Heart right ventricle (tissue), 16 donors: ENCODE measurements at regions of chr10 and their contacts with region 1.

Region 1: DNA sequence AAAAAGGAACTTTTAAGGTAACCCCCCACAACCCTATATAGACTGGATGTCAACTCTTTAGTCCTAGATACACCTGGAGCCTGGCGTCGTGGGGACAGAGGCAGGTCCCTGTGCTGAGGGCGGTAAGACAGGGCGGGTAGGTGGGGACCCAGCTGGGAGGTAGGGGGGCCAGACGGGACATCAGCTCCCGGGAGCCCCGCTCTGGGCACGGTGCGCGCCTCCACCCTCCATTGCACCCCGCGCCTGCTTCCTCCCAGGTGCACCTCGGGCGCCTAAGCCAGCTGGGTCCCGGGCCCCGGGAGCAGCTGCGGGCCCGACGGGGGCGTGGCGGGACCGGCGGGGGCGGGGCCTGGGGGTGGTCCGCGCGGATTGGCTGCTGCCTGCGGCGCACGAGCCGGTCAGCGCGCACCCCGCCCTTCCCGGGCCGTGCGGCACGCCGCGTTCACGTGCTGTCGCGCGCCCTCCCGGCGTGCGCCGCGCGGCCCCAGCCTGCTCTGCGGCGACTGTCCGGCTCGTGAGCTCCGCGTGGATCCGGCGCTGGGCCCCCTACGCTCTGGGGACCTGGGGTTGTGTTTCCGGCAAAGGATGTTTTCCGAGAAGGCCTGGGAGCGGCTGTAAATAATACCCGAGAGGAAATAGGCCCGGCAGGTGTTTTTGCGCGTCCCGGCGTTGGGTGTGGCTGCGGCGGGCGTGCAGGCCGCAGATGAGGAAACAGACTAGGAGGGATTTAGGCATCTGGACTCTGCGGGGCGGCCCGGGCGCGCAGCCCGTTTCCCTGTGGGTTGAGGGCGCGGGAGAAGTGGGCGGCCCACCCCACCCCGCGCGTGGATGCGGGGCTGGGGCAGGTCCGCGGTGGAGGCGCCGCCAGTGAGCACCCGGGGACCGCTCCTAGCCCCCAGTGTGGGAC is 39.1 kb upstream of the PFKFB3 start:
- DNase-seq: peak; percentile 91 to 92
- ATAC-seq: peak; percentile 98 to 100 (median 99)
- H3K4me3 ChIP-seq: peak overlapping the region; percentile 27 to 97 (median 82)
- H3K27ac ChIP-seq: peak overlapping the region; percentile 91 to 98 (median 94)
- H3K4me1 ChIP-seq: peaks cover 6 to 49% (median 30%) of the 10 kb centered on the region in 9 donors
- H3K27me3 ChIP-seq: no peaks in the 10 kb centered on the region
- CTCF ChIP-seq: peak in 1 of 9 donors; percentile 9

Region 2: GRCh38 chr10:6068422-6068821 is 95.2 kb before region 1 on chr10:
- intact Hi-C with region 1: no loop called
- DNase-seq: no peak
- ATAC-seq: peak in 5 of 8 donors; percentile 28 to 48 (median 35)
- H3K4me3 ChIP-seq: no peak overlapping the region
- H3K27ac ChIP-seq: peak overlapping the region in 1 of 10 donors; percentile 82
- H3K4me1 ChIP-seq: peaks cover 0 to 85% (median 32%) of the 10 kb centered on the region in 9 donors
- H3K27me3 ChIP-seq: no peaks in the 10 kb centered on the region
- CTCF ChIP-seq: no peak

Region 3: GRCh38 chr10:6138456-6138855 is 25.2 kb before region 1 on chr10:
- intact Hi-C with region 1: loop called in 1 of 10 experiments (anchors 2 kb)
- DNase-seq: no peak
- ATAC-seq: no peak
- H3K4me3 ChIP-seq: no peak overlapping the region
- H3K27ac ChIP-seq: no peak overlapping the region
- H3K4me1 ChIP-seq: peaks cover 0 to 47% (median 0%) of the 10 kb centered on the region in 9 donors
- H3K27me3 ChIP-seq: peaks cover 0 to 36% (median 5%) of the 10 kb centered on the region in 7 donors
- CTCF ChIP-seq: no peak

Region 4: DNA sequence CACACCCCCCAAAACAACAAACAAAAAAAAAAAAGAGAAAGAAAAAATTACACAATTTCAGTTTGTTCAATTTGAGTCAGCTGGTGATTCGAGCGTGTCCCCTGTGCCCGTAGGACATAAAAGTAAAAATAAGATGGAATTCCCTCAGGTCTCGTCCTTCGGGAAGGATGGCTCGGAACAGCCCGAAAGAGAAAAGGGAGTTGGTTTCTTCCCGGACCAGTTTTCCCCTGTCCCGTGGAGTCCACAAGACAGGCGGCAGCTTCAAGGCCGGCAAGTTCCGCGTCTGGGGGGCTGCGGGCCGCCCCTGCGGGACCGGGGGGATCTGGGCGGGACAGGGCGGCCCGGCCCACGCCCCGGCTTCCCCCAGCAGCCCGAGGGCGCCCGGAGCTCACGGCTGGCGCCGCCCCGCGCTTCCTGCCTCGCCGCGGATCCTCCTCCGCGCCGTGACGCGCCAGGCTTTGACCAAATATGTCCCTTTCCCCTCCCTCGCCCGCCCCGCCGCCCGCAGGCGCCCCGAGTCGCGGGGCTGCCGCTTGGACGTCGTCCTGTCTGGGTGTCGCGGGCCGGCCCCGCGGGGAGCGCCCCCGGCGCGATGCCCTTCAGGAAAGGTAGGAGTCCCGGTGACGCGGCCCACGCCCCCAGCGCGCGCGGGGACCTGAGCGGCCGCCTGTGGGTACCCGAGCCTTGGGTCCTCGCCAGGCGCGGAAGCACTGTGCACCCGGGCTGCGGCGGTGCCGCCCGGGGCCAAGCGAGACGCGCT is 19.0 kb before region 1 on chr10:
- intact Hi-C with region 1: loop called in 2 of 10 experiments (anchors 2 kb)
- DNase-seq: peak; percentile 91 to 92
- ATAC-seq: peak; percentile 92 to 96 (median 94)
- H3K4me3 ChIP-seq: peak overlapping the region; percentile 61 to 94 (median 82)
- H3K27ac ChIP-seq: peak overlapping the region; percentile 30 to 98 (median 86)
- H3K4me1 ChIP-seq: peaks cover 0 to 82% (median 16%) of the 10 kb centered on the region in 9 donors
- H3K27me3 ChIP-seq: peaks cover 0 to 14% (median 0%) of the 10 kb centered on the region in 7 donors
- CTCF ChIP-seq: peak in 3 of 9 donors; percentile 30 to 40 (median 35)